Naive thymus-derived CD4-positive, alpha-beta T cell (primary cell): ENCODE measurements at regions of chr20 and their contacts with region 1.

Region 1: GRCh38 chr20:5749952-5750779 is at the start of gene SHLD1:
- DNase-seq: peak; percentile 56 to 86 (median 80)
- ATAC-seq: peak; percentile 98
- H3K4me3 ChIP-seq: peak within 1 kb of the TSS; percentile 70
- H3K4me3 Mint-ChIP-seq: peak within 1 kb of the TSS; percentile 81 to 97 (median 92)
- H3K27ac ChIP-seq: peak within 1 kb of the TSS; percentile 79
- H3K27ac Mint-ChIP-seq: peak within 1 kb of the TSS; percentile 91 to 100 (median 94)
- H3K4me1 ChIP-seq: peaks cover 5 to 14% of the 10 kb centered on the region in 2 donors
- H3K4me1 Mint-ChIP-seq: peaks cover 15 to 38% (median 28%) of the 10 kb centered on the region in 7 donors
- H3K27me3 ChIP-seq: no peaks in the 10 kb centered on the region
- H3K27me3 Mint-ChIP-seq: peaks cover 0 to 4% (median 0%) of the 10 kb centered on the region in 5 donors
- total RNA-seq, gene SHLD1: 12.1 to 14.2 (median 13.2) TPM

Region 2: DNA sequence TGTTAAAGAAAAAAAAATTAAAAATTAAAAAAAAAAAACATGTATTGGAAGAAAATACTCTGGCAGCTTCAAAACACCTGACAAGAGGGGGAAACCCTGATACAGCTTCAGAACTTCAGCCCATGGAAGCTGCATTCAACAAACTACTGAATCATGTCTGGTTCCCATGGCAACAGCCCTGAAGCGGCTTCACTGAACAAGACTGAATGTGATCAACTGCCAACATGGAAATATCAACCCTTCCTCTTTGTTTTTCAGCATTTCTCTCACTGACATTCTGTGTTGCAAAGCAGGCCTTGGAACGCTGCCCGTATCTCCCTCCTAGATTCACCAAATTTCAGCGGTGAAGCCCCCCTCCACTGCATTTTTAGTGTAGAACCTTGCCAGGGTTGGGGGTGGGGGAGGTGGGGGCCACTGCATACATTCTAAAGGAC is 91.2 kb before region 1 on chr20:
- CTCF ChIA-PET with region 1: no interaction called
- POLR2A ChIA-PET with region 1: no interaction called
- intact Hi-C with region 1: loop called in 1 of 2 experiments (anchors 5 kb)
- DNase-seq: peak in 7 of 9 donors; percentile 20 to 83 (median 60)
- ATAC-seq: peak; percentile 75
- H3K4me3 ChIP-seq: no peak overlapping the region
- H3K4me3 Mint-ChIP-seq: peak overlapping the region in 1 of 10 donors; percentile 9
- H3K27ac ChIP-seq: no peak overlapping the region
- H3K27ac Mint-ChIP-seq: peak overlapping the region in 7 of 9 donors; percentile 0 to 94 (median 65)
- H3K4me1 ChIP-seq: peaks cover 0 to 9% of the 10 kb centered on the region in 2 donors
- H3K4me1 Mint-ChIP-seq: peaks cover 6 to 22% (median 12%) of the 10 kb centered on the region in 7 donors
- H3K27me3 ChIP-seq: no peaks in the 10 kb centered on the region
- H3K27me3 Mint-ChIP-seq: no peaks in the 10 kb centered on the region

Region 3: DNA sequence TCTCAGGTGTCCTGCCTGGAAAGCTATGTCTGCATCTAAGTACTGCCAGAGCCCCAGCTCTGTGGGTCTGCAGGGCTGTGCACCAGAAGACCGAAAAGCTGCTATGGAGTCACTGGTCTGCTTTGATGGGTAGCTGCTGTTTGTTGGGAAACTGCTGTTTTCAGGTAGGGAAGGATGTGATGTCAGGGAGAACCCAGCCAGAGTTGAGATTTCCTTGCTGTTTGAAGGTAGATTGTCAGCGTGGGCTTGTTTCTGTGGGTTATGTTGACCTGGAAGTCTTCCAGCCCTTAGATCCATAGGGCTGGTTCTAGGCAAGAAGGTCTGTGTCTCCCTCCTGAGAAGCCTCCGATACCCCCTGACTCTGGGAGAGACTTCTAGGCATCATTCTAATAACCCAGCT is 12.2 kb before region 1 on chr20:
- CTCF ChIA-PET with region 1: interaction called, 7 read pairs
- POLR2A ChIA-PET with region 1: interaction called, 6 read pairs
- intact Hi-C with region 1: loop called in 1 of 2 experiments (anchors 1 kb)
- DNase-seq: peak in 6 of 9 donors; percentile 18 to 40 (median 24)
- ATAC-seq: peak; percentile 20
- H3K4me3 ChIP-seq: no peak overlapping the region
- H3K4me3 Mint-ChIP-seq: peak overlapping the region in 9 of 10 donors; percentile 51 to 84 (median 79)
- H3K27ac ChIP-seq: peak overlapping the region; percentile 64
- H3K27ac Mint-ChIP-seq: peak overlapping the region; percentile 47 to 98 (median 96)
- H3K4me1 ChIP-seq: peaks cover 12 to 22% of the 10 kb centered on the region in 2 donors
- H3K4me1 Mint-ChIP-seq: peaks cover 15 to 43% (median 32%) of the 10 kb centered on the region in 7 donors
- H3K27me3 ChIP-seq: no peaks in the 10 kb centered on the region
- H3K27me3 Mint-ChIP-seq: peaks cover 0 to 4% (median 0%) of the 10 kb centered on the region in 5 donors

Region 4: DNA sequence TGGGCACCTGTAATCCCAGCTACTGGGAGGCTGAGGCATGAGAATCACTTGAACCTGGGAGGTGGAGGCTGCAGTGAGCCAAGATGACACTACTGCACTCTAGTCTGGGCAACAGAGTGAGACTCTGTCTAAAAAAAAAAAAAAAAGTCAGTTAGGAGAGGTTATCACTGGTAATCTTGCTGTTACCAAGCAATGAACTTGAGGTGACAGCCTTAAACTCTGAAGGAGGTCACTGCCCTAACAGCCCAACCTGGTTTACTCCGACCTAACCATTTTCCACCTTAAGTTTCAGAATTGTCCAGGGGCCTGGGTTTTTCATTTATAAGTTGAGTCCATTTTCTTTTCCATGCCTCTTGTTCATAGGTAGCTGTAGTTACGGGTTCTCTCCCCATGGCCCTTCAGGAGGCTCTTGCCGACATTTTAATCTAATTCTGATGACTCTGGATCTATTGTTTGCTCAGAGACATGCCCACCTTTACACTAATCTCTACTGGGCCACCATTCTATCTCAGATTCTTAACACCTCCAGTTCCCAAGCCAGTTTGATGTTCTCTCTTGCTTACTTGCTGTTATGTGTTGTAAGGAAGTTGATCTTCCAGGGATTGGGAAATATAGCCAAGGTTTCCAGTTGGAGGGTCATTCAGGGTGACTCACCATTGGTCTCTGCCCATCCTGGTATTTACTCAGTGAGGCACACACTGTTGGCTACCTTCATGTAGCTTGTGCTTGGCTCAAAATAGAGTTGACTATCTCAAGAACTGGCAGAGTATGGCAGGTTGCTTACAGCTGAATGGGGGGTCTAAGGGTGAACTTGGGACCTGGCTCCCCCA is 29.1 kb after region 1 on chr20:
- CTCF ChIA-PET with region 1: no interaction called
- POLR2A ChIA-PET with region 1: no interaction called
- intact Hi-C with region 1: no loop called
- DNase-seq: no peak
- ATAC-seq: no peak
- H3K4me3 ChIP-seq: no peak overlapping the region
- H3K4me3 Mint-ChIP-seq: no peak overlapping the region
- H3K27ac ChIP-seq: no peak overlapping the region
- H3K27ac Mint-ChIP-seq: peak overlapping the region in 5 of 9 donors; percentile 14 to 86 (median 67)
- H3K4me1 ChIP-seq: no peaks in the 10 kb centered on the region
- H3K4me1 Mint-ChIP-seq: peaks cover 0 to 18% (median 8%) of the 10 kb centered on the region in 7 donors
- H3K27me3 ChIP-seq: no peaks in the 10 kb centered on the region
- H3K27me3 Mint-ChIP-seq: no peaks in the 10 kb centered on the region

Region 5: DNA sequence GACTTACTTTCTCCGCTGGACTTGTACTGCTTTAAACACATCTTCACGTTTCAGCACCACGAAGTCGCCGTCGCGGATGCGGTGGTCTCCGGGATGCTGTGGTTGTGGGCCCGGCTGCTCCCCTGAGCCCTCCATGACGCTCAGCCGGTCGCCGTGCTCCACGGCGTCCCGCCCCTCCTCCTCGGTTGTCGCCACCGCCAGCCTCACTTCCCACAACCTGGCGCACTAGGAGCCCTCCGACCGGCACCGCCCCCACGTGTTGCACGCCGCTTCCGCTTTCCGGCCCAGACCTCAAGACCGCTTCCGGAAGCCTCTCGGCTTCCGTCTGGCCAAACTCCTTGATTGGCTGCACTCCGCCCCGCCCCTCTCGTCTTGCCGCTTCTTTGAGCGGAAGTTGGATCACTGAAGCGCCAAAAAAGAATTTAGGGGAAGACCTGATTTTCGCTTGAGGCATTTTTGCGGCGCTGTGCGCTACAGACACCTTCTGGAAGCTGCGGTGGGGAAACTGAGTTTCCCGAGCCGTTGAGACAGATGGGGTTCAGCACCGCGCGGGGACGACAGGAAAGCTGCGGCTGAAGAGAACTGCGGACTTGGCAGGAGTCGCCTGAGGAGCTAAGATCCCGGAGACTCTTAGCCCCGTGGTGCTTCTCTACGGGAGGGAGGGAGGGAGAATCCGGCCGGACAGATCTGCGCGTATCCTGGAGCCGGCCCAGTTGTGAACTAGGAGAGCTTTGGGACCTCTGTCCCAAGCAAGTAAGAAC is 200.3 kb after region 1 on chr20 and contains the starts of genes MCM8 and TRMT6:
- CTCF ChIA-PET with region 1: no interaction called
- POLR2A ChIA-PET with region 1: no interaction called
- intact Hi-C with region 1: loop called (anchors 1 kb)
- DNase-seq: peak; percentile 82 to 97 (median 95)
- ATAC-seq: peak; percentile 97
- H3K4me3 ChIP-seq: peak within 1 kb of the TSS; percentile 89
- H3K4me3 Mint-ChIP-seq: peak within 1 kb of the TSS; percentile 91 to 99 (median 96)
- H3K27ac ChIP-seq: peak within 1 kb of the TSS; percentile 82
- H3K27ac Mint-ChIP-seq: peak within 1 kb of the TSS; percentile 91 to 100 (median 97)
- H3K4me1 ChIP-seq: peaks cover 13 to 17% of the 10 kb centered on the region in 2 donors
- H3K4me1 Mint-ChIP-seq: peaks cover 7 to 61% (median 45%) of the 10 kb centered on the region in 7 donors
- H3K27me3 ChIP-seq: no peaks in the 10 kb centered on the region
- H3K27me3 Mint-ChIP-seq: peaks cover 0 to 4% (median 0%) of the 10 kb centered on the region in 5 donors
- total RNA-seq, gene MCM8: 2.6 to 22.7 (median 10.8) TPM
- total RNA-seq, gene TRMT6: 14.5 to 18.5 (median 17.8) TPM

Region 6: GRCh38 chr20:6070829-6071695 is 320.9 kb after region 1 on chr20:
- CTCF ChIA-PET with region 1: no interaction called
- POLR2A ChIA-PET with region 1: no interaction called
- intact Hi-C with region 1: no loop called
- DNase-seq: no peak
- ATAC-seq: no peak
- H3K4me3 ChIP-seq: no peak overlapping the region
- H3K4me3 Mint-ChIP-seq: no peak overlapping the region
- H3K27ac ChIP-seq: no peak overlapping the region
- H3K27ac Mint-ChIP-seq: no peak overlapping the region
- H3K4me1 ChIP-seq: no peaks in the 10 kb centered on the region
- H3K4me1 Mint-ChIP-seq: peaks cover 0 to 7% (median 3%) of the 10 kb centered on the region in 7 donors
- H3K27me3 ChIP-seq: no peaks in the 10 kb centered on the region
- H3K27me3 Mint-ChIP-seq: peaks cover 0 to 2% (median 0%) of the 10 kb centered on the region in 5 donors